Tibial artery (tissue), 4 donors: ENCODE measurements at regions of chr5 and their contacts with region 1.

Region 1: DNA sequence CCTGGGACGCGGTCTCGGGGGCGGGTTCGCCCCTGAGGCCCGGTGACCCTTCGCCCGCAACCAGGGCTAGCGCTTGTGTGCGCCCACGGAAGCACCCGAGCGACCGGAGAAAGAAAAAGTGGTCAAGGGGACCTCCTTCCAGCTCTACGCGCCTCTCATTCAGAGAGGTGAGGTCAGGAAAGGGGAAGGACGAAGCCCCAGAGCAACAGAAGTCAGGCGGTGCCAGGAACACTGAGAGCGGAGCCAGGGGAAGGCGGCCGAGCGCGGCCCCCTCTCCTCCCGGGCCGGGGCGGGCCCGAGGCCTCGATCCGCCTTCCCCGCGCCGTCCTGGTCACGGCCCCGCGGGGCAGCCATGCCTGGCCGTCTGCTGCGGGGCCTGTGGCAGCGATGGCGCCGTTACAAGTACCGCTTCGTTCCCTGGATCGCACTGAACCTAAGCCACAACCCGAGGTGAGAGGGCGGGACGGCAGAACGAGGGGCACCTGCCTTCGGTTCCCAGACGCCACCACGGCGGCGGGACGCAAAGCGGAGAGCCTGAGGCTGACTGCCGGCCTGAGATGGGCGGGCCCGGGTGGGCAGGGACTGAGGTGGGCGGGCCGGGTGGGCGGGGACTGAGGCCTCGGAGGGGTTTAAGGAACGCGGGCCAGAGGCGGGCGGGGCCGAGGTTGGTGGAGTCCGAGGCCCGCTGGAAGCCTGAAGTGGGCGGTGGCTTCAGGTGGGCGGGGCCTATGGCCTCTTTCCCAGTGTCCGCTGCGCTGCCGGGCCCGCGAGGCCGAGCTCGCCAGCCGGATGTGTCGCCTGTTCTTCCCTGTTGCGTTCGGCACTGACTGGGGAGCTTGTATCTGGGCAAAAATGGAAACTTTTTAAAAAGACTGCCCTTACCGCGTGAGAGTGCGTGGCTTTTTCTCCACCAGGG is at the start of gene SETD9:
- DNase-seq: peak; percentile 98 to 99
- H3K4me3 ChIP-seq: peak within 1 kb of the TSS; percentile 67 to 74
- H3K27ac ChIP-seq: peak within 1 kb of the TSS; percentile 92 to 94
- H3K4me1 ChIP-seq: peaks cover 0 to 10% (median 4%) of the 10 kb centered on the region in 4 donors
- H3K27me3 ChIP-seq: no peaks in the 10 kb centered on the region
- CTCF ChIP-seq: no peak

Region 2: DNA sequence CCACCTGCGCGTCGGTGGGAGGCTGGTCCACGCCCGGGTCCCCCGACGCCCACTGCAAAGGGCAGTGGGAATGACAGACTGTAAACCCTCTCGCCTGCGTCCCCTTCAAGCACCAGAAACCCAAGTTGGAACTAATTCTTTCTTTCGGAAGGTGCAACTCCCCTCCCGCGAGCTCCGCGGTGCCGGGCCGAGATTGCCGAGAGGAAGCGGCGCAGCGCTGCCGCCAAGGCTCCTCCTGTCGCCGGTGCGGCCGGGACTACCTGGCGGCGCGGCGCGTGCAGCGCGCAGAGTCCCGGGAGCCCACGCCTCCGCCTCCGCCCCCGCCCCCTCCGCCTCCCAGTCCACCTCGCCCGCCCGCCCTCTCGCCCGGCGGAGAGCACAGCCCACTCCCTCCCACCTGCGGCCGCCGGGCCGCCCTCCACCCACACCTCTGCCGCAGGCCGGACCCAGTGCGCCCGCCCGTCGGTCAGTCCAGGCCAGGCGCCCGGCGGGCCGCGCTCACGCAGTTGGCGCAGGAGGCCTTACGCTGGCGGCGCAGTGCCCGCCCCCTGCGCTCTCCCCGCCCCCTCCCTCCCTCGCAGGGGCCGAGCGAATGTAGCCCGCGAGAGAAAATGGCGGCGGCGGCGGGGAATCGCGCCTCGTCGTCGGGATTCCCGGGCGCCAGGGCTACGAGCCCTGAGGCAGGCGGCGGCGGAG is 94.4 kb before region 1 on chr5 and contains the start of gene MAP3K1:
- intact Hi-C with region 1: loop called (anchors 5 kb)
- DNase-seq: peak; percentile 57 to 85
- H3K4me3 ChIP-seq: peak within 1 kb of the TSS; percentile 62 to 91
- H3K27ac ChIP-seq: peak within 1 kb of the TSS; percentile 82 to 85
- H3K4me1 ChIP-seq: peaks cover 0 to 29% (median 5%) of the 10 kb centered on the region in 4 donors
- H3K27me3 ChIP-seq: no peaks in the 10 kb centered on the region
- CTCF ChIP-seq: no peak

Region 3: DNA sequence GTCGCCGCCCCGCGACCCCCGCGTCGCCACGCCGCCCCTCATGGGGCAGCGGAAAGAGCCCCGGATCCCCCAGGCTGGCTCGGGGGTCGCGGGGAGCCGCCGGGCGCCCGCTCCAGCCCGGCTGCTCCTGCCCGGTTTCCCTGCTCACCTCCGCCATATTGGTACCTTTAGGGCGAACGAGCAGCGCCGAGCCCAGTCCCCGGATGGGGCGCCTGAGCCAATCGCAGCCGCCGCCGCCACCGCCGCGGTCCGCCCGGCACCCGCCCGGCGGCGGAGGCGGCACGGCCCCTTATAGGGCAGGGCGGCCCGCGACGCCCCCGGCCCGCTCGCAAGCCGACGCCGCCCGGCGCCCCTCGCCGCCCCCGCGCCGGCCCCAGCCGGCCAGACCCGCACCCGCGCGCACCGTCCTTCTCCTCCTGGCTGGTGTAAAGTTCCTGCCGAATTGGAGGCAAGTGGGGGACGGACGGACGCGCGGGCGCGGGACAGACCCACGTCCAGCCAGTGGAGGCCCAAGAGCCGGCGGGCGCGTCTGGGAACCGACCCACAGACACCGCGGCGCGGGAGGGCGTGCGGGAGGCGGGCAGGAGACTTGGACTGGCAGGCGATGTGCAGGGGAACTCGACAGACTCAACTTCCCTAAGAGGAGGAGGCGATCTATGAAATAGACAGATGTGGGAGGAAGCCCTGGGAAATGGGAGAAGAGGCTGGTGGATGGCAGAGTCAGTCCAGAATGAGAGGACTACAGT is 42.6 kb after region 1 on chr5 and contains the start of gene MIER3:
- intact Hi-C with region 1: loop called (anchors 5 kb)
- DNase-seq: peak; percentile 58 to 86
- H3K4me3 ChIP-seq: peak within 1 kb of the TSS; percentile 89 to 93
- H3K27ac ChIP-seq: peak within 1 kb of the TSS; percentile 77 to 89
- H3K4me1 ChIP-seq: peaks cover 0 to 19% (median 12%) of the 10 kb centered on the region in 4 donors
- H3K27me3 ChIP-seq: no peaks in the 10 kb centered on the region
- CTCF ChIP-seq: no peak

Region 4: DNA sequence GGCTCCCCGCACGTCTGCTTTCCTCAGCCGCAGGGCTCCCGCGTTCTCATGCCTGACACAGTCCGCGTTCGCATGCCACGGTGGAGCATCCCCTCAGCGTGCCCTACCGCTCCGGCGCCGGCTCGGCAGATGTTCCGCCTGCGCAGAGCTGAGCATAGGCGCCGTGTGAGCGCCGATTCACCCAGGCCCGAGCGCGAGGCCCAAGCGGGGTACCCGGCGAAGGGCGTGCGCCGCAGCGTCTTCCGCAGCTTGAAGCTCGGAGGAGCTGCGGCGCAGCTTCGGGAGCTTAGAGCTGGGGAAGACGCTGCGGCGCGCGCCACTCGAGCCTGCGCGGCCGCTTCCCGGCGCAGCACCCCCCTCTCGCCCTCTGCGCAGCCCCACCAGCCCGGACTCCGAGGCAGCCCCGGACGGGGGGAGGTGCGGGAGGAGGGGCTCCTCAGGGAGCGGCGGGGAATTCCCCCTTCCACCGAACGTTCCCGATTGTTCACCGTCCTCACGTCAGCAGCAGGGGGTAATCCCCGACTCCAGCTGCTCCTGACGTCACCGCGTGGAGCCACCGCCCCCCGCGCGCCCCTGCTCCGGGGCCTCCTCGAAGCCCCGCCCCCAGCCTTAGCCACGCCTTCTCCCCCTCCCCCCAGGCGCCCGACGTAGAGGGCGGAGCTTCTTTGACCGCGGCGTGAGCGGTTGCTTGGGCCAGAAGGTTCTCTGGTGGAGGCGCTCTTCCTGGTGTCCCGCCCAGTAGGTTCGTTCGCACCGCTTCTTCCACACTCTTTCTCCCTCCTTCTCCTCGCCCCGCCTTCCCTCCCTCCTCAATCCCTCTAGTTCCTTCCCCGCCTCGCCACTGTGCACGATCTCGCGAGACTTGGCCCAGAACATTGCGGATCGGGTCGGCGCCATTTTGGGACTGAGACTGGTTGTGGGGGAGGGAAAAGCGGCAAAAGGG is 263.9 kb after region 1 on chr5 and contains the start of gene GPBP1:
- intact Hi-C with region 1: loop called (anchors 2 kb)
- DNase-seq: peak; percentile 100
- H3K4me3 ChIP-seq: peak within 1 kb of the TSS; percentile 73 to 89
- H3K27ac ChIP-seq: peak within 1 kb of the TSS; percentile 95 to 99
- H3K4me1 ChIP-seq: peaks cover 0 to 38% (median 16%) of the 10 kb centered on the region in 4 donors
- H3K27me3 ChIP-seq: no peaks in the 10 kb centered on the region
- CTCF ChIP-seq: no peak